PC-3 (cell line): ENCODE measurements at regions of chr11 and their contacts with region 1.

Region 1: DNA sequence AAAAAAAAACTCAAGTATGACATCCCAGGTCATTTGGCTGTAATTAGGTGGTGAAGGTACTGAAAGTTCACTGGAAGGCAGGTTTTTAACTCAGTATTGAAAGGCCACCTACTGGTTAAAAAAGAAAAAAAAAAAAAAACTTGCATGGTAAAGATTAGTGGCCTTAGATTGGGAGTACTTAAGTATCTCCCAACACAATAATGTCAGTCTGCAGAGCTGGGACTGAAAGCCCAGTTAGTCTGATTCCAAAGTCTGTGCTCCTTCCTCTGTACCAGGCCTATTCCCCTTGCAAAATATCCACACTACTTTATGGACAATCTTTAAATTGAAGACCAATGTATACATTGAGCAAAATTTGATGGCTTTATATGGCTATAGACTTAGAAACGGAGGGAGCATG is 85.5 kb downstream of the NOX4 start:
- DNase-seq: peak; percentile 47
- ATAC-seq: peak; percentile 35; the same call in 1 of the 2 replicates
- H3K4me3 ChIP-seq: no peak overlapping the region
- H3K27ac ChIP-seq: no peak overlapping the region
- H3K4me1 ChIP-seq: no peaks in the 10 kb centered on the region
- H3K27me3 ChIP-seq: no peaks in the 10 kb centered on the region
- CTCF ChIP-seq: peak; percentile 60

Region 2: DNA sequence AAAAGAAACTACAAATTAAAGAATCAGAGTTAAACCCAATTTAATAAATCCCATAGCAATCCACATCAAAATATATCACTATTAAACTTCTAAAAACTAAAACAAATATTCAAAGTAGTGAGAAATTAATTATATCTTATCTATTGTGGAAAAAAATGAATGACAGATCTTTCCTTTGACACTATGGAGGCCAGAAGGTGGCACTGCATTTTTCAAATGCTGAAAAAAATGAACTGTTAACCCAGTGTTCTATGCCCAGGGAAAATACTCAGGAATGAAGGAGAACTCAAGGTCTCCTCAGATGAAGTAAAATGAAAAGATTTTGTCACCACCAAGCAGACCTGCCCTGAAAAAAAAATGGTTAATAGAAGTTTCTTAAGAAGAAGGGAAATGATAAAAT is 200.3 kb before region 1 on chr11:
- CTCF ChIA-PET with region 1: interaction called, 5 read pairs
- POLR2A ChIA-PET with region 1: no interaction called
- intact Hi-C with region 1: loop called (anchors 5 kb)
- DNase-seq: peak; percentile 26
- ATAC-seq: no peak
- H3K4me3 ChIP-seq: no peak overlapping the region
- H3K27ac ChIP-seq: no peak overlapping the region
- H3K4me1 ChIP-seq: no peaks in the 10 kb centered on the region
- H3K27me3 ChIP-seq: 0 out of 2 replicates have a peak, but pooled peaks cover 3% of the 10 kb centered on the region
- CTCF ChIP-seq: peak; percentile 61

Region 3: GRCh38 chr11:89293965-89294679 is 111.5 kb before region 1 on chr11:
- CTCF ChIA-PET with region 1: no interaction called
- POLR2A ChIA-PET with region 1: no interaction called
- intact Hi-C with region 1: no loop called
- DNase-seq: no peak
- ATAC-seq: no peak
- H3K4me3 ChIP-seq: no peak overlapping the region
- H3K27ac ChIP-seq: no peak overlapping the region
- H3K4me1 ChIP-seq: no peaks in the 10 kb centered on the region
- H3K27me3 ChIP-seq: peaks cover 17% of the 10 kb centered on the region
- CTCF ChIP-seq: no peak

Region 4: GRCh38 chr11:89327885-89328284 is 77.7 kb before region 1 on chr11:
- CTCF ChIA-PET with region 1: no interaction called
- POLR2A ChIA-PET with region 1: no interaction called
- intact Hi-C with region 1: loop called (anchors 5 kb)
- DNase-seq: no peak
- ATAC-seq: no peak
- H3K4me3 ChIP-seq: no peak overlapping the region
- H3K27ac ChIP-seq: no peak overlapping the region
- H3K4me1 ChIP-seq: no peaks in the 10 kb centered on the region
- H3K27me3 ChIP-seq: peaks cover 3% of the 10 kb centered on the region
- CTCF ChIP-seq: no peak

Region 5: GRCh38 chr11:89436071-89436470 is 30.4 kb after region 1 on chr11:
- CTCF ChIA-PET with region 1: no interaction called
- POLR2A ChIA-PET with region 1: no interaction called
- intact Hi-C with region 1: no loop called
- DNase-seq: no peak
- ATAC-seq: no peak
- H3K4me3 ChIP-seq: no peak overlapping the region
- H3K27ac ChIP-seq: no peak overlapping the region
- H3K4me1 ChIP-seq: no peaks in the 10 kb centered on the region
- H3K27me3 ChIP-seq: 0 out of 2 replicates have a peak, but pooled peaks cover 3% of the 10 kb centered on the region
- CTCF ChIP-seq: no peak

Region 6: GRCh38 chr11:89447845-89448244 is 42.2 kb after region 1 on chr11:
- CTCF ChIA-PET with region 1: no interaction called
- POLR2A ChIA-PET with region 1: no interaction called
- intact Hi-C with region 1: no loop called
- DNase-seq: no peak
- ATAC-seq: no peak
- H3K4me3 ChIP-seq: no peak overlapping the region
- H3K27ac ChIP-seq: no peak overlapping the region
- H3K4me1 ChIP-seq: no peaks in the 10 kb centered on the region
- H3K27me3 ChIP-seq: 0 out of 2 replicates have a peak, but pooled peaks cover 9% of the 10 kb centered on the region
- CTCF ChIP-seq: no peak

Region 7: DNA sequence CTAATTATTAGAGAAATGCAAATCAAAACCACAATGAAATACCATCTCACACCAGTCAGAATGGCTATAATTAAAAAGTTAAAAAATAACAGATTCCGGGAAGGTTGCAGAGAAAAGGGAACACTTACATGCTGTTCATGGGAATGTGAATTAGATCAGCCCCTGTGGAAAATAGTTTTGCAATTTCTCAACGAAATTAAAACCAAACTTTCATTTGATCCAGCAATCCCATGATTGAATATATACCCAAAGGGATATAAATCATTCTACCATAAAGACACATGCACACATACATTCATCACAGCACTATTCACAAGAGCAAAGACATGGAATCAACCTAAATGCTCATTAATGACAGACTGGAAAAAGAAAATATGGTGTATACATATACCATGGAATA is 53.1 kb after region 1 on chr11:
- CTCF ChIA-PET with region 1: no interaction called
- POLR2A ChIA-PET with region 1: no interaction called
- intact Hi-C with region 1: no loop called
- DNase-seq: no peak
- ATAC-seq: no peak
- H3K4me3 ChIP-seq: no peak overlapping the region
- H3K27ac ChIP-seq: no peak overlapping the region
- H3K4me1 ChIP-seq: no peaks in the 10 kb centered on the region
- H3K27me3 ChIP-seq: peaks cover 3% of the 10 kb centered on the region; the same call in 1 of the 2 replicates
- CTCF ChIP-seq: no peak